CD8-positive, alpha-beta T cell (primary cell): ENCODE measurements at regions of chr6 and their contacts with region 1.

Region 1: GRCh38 chr6:166313255-166314070 is 5.3 kb upstream of the PRR18 start:
- DNase-seq: peak in 8 of 9 experiments; percentile 18 to 76 (median 58)
- ATAC-seq: peak; percentile 98
- H3K4me3 ChIP-seq: no peak overlapping the region
- H3K4me3 Mint-ChIP-seq: no peak overlapping the region
- H3K27ac ChIP-seq: no peak overlapping the region
- H3K27ac Mint-ChIP-seq: no peak overlapping the region
- H3K4me1 ChIP-seq: peaks cover under 1% of the 10 kb centered on the region
- H3K4me1 Mint-ChIP-seq: no peaks in the 10 kb centered on the region
- H3K27me3 ChIP-seq: peaks cover 0 to 2% of the 10 kb centered on the region in 2 experiments
- H3K27me3 Mint-ChIP-seq: peaks cover 18% of the 10 kb centered on the region
- CTCF ChIP-seq: peak; percentile 61

Region 2: DNA sequence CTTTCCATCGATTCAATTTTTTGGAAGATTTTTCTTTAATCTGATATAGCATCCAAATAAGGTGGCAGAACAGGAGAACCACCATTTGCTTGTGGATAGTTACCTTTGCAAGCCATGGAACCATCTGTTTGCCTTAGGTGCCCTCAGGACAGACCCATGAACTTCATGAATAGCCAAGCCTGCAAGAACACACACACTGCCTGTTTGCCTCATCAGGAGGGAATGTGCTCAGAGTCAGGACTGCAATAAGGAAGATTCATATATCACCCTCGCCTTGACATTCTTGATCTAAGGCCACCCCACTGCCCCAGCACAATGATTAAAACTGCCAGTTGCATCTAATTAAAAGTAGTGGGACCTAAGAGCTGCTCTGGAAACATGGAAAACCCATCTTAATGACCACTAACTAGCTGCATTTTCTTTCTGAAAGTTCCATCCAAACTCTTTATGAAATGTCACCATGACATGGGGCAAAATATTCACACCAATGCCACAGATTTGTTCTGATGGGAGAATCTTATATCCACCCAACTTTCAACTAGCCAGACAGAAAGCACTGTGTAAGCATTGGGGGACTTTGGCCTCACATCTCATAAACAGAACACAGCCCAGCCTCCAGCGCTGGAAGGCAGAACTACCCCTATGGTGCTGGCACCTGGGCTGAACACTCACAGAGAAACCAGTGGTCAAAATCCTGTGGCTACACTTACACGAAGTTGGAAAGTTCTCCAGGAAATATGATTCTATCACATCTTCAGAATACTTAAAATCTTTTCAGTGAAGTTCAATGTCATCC is 194.1 kb before region 1 on chr6:
- CTCF ChIA-PET with region 1: no interaction called
- POLR2A ChIA-PET with region 1: no interaction called
- intact Hi-C with region 1: no loop called
- DNase-seq: no peak
- ATAC-seq: no peak
- H3K4me3 ChIP-seq: no peak overlapping the region
- H3K4me3 Mint-ChIP-seq: no peak overlapping the region
- H3K27ac ChIP-seq: no peak overlapping the region
- H3K27ac Mint-ChIP-seq: no peak overlapping the region
- H3K4me1 ChIP-seq: no peaks in the 10 kb centered on the region
- H3K4me1 Mint-ChIP-seq: no peaks in the 10 kb centered on the region
- H3K27me3 ChIP-seq: no peaks in the 10 kb centered on the region
- H3K27me3 Mint-ChIP-seq: peaks cover under 1% of the 10 kb centered on the region
- CTCF ChIP-seq: no peak

Region 3: GRCh38 chr6:166325383-166326042 is 12.1 kb after region 1 on chr6:
- CTCF ChIA-PET with region 1: interaction called, 15 read pairs
- POLR2A ChIA-PET with region 1: no interaction called
- intact Hi-C with region 1: no loop called
- DNase-seq: no peak
- ATAC-seq: no peak
- H3K4me3 ChIP-seq: no peak overlapping the region
- H3K4me3 Mint-ChIP-seq: no peak overlapping the region
- H3K27ac ChIP-seq: no peak overlapping the region
- H3K27ac Mint-ChIP-seq: no peak overlapping the region
- H3K4me1 ChIP-seq: no peaks in the 10 kb centered on the region
- H3K4me1 Mint-ChIP-seq: peaks cover 18% of the 10 kb centered on the region
- H3K27me3 ChIP-seq: no peaks in the 10 kb centered on the region
- H3K27me3 Mint-ChIP-seq: no peaks in the 10 kb centered on the region
- CTCF ChIP-seq: no peak

Region 4: DNA sequence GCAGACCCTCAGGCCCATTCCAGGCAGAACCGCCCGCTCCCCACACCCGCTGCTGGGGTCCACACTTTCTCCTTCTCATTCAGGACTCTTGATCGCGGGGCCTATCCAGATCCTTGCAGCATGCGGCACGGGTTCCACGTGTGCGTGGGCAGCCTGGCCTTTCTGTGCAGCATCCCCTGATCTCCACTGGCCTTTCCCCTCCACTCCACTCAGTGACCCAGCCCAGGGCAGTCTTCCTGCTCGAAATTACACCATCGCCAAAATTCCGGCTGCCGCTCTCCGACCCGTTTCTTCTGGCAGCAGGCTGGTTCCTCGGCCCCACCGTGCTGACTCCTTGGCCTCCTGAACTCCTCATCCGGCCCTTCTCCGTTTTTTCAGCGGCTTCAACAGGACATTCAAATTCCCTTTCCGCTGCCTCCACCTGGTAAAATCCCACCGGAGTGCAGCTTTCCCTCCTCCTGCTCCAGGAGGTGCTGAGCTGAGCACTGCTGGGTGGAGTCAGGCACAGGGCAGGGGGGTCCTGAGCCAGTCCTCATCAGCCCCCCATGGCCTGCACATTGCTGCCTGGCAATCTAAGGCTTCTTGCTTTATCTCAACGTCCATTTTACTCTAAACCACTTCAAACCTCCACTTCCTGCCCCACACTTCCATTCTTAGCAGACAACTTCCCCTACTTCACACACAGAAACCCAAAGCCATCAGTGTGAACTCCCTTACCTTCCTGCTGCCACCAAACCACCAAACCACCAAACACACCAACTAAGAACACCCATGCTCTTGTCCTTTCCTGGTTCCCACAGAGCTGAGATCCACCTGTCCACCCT is 19.9 kb after region 1 on chr6:
- CTCF ChIA-PET with region 1: interaction called, 14 read pairs
- POLR2A ChIA-PET with region 1: no interaction called
- intact Hi-C with region 1: no loop called
- DNase-seq: peak in 4 of 9 experiments; percentile 23 to 81 (median 56)
- ATAC-seq: peak; percentile 81
- H3K4me3 ChIP-seq: peak overlapping the region in 1 of 2 experiments; percentile 27
- H3K4me3 Mint-ChIP-seq: peak overlapping the region; percentile 48
- H3K27ac ChIP-seq: peak overlapping the region in 1 of 2 experiments; percentile 26
- H3K27ac Mint-ChIP-seq: peak overlapping the region; percentile 34
- H3K4me1 ChIP-seq: peaks cover 52% of the 10 kb centered on the region
- H3K4me1 Mint-ChIP-seq: peaks cover 61% of the 10 kb centered on the region
- H3K27me3 ChIP-seq: no peaks in the 10 kb centered on the region
- H3K27me3 Mint-ChIP-seq: no peaks in the 10 kb centered on the region
- CTCF ChIP-seq: no peak